Pancreas (tissue), 10 donors: ENCODE measurements at regions of chr5 and their contacts with region 1.

Region 1: GRCh38 chr5:43729846-43730478 is 127.0 kb downstream of the NNT start:
- DNase-seq: no peak
- ATAC-seq: peak; percentile 57 to 79 (median 76)
- H3K4me3 ChIP-seq: no peak overlapping the region
- H3K27ac ChIP-seq: no peak overlapping the region
- H3K4me1 ChIP-seq: peaks cover 7 to 10% (median 10%) of the 10 kb centered on the region in 3 donors
- H3K27me3 ChIP-seq: no peaks in the 10 kb centered on the region
- CTCF ChIP-seq: peak in 3 of 4 donors; percentile 25 to 42 (median 32)

Region 2: GRCh38 chr5:43348207-43348606 is 381.8 kb before region 1 on chr5:
- intact Hi-C with region 1: no loop called
- DNase-seq: no peak
- ATAC-seq: no peak
- H3K4me3 ChIP-seq: no peak overlapping the region
- H3K27ac ChIP-seq: no peak overlapping the region
- H3K4me1 ChIP-seq: no peaks in the 10 kb centered on the region
- H3K27me3 ChIP-seq: no peaks in the 10 kb centered on the region
- CTCF ChIP-seq: no peak

Region 3: DNA sequence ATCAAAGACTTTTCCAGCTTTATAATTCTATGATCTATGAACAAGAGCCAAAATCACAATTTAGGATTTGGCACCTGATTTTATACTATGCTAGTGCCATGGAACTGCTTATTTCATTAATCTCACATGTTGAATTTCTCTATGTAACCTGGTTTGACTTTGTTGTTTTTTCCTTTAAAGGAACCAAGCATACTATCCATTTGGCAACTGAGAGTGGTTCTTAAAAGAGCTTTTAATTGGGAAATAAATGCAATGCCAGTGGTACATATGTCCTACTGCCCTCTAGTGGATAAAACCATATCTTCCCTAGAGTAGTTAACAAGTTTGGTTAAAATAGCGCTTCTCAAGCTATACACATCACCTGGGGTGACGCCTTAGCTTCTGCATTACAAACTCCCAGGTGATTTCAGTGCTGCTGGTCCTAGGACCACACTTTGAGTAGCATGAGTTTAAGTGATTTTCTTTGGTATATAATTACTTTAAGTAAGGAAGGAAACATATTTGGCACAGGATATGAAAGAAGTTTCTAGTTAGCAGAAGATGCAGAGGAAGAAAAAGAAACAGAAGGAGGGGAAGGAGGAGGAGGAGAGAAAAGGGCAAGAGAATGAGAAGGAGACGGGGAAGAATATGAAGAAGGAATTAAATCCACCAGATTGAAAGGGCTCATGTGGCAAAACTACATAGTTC is 602.5 kb after region 1 on chr5:
- intact Hi-C with region 1: loop called in 1 of 3 experiments (anchors 5 kb)
- DNase-seq: no peak
- ATAC-seq: peak; percentile 64 to 91 (median 82)
- H3K4me3 ChIP-seq: no peak overlapping the region
- H3K27ac ChIP-seq: no peak overlapping the region
- H3K4me1 ChIP-seq: peaks cover 0 to 4% (median 0%) of the 10 kb centered on the region in 3 donors
- H3K27me3 ChIP-seq: no peaks in the 10 kb centered on the region
- CTCF ChIP-seq: peak in 3 of 4 donors; percentile 44 to 51 (median 48)

Region 4: DNA sequence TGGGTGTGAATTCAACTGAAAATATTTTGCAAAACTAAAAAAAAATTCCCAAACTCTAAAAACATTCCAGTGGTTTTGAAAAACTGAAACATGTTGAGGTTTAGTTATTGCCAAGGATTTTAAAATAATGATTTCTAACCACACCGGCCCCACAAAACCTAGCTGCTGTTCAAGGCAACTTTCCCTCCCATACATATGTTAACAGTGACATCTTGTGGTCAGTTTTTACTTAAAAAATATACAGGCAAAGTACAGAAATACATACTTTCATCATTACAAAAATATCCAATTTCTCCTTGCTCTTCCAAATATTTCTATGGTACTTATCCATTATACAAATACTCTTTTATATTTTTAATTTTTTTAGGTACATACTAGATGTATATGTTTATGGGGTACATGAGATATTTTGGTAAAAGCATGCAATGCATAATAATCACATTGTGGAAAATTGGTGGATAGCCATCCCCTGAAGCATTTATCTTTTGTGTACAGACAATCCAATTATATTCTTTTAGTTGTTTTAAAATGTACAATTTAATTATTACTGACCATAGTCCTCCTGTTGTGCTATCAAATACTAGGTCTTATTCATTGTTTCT is 1044.4 kb after region 1 on chr5:
- intact Hi-C with region 1: loop called in 1 of 3 experiments (anchors 5 kb)
- DNase-seq: peak in 1 of 6 donors; percentile 10
- ATAC-seq: peak in 3 of 4 donors; percentile 80 to 85 (median 82)
- H3K4me3 ChIP-seq: no peak overlapping the region
- H3K27ac ChIP-seq: no peak overlapping the region
- H3K4me1 ChIP-seq: peaks cover 0 to 3% (median 0%) of the 10 kb centered on the region in 3 donors
- H3K27me3 ChIP-seq: no peaks in the 10 kb centered on the region
- CTCF ChIP-seq: peak in 3 of 4 donors; percentile 33 to 36 (median 33)